GM13977 (cell line): ENCODE measurements at regions of chr3 and their contacts with region 1.

Region 1: DNA sequence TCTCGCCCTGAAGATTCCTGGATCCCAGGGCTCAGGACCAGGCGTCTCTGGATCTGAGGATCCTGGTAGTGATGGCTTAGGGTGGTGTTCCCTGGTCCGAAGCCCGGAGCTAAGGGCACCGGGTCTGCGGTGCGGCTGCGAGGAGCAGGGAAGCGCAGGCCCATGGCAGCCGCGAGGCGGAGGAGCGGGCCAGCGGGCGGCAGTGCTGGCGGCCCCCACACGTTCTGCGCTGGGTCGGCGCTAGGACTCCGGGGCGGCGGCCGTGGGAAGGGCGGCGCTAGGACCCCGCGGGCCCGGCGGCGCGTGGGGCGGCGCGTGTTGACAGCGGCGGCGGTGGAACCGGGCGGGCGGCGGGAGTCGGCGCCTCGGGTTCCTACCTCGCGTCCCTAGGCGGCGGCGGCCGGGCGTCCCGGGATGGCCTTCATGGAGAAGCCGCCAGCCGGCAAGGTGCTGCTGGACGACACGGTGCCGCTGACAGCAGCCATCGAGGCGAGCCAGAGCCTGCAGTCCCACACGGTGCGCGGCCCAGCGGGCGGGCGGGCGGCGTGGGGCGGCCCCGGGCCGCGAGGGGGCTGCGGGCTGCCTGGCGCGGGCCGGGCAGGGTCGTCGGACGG is at the start of gene PXK:
- DNase-seq: peak; percentile 88
- CTCF ChIP-seq: peak; percentile 46

Region 2: GRCh38 chr3:58414538-58415197 is 82.0 kb after region 1 on chr3:
- in situ Hi-C with region 1: loop called (anchors 10 kb)
- DNase-seq: peak; percentile 52
- CTCF ChIP-seq: peak; percentile 72

Region 3: DNA sequence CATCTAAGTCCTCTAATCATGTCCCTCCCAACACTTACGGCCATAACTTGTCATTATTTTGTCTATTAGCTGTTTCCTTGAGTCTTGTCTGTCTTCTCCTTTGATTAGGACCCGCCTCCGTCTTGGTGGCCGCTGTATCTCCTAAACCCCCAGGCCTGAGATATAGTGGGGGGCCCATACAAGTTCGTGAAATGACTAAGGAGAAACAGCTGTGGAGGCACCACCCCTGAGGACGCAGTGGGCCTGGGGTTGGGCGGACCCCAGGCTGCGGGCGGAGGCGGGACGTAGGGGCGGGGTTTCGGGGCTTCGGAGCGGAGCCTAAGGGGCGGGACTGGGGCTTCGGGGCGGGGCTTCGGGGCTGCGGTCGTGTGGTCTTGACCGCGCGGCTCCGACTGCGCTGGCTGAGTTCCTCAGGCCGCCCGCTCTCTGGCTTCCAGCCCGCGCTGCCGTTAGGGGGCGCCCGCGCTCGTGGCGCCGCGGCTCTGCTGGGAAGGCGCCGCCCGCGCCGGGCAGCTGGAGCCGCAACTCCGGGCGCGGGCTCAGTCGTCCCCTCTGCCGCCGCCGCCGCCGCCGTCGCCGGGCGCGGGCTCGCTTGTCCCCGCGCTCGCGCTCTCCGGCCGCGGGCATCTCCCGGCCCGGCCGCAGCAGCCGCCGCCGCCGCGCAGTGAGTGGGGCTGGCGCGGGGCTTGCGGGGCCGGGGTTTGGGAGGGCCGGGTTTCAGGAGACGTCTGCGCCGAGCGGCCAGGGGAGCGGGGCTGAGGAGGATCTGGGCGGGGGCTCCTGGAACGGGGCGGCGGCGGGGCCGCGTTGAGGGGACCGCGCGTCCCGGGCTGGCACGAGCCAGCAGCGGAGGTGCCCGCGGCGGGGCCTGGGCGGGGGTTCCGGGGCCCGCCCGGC is 159.1 kb after region 1 on chr3 and contains the start of gene KCTD6:
- in situ Hi-C with region 1: no loop called
- DNase-seq: peak; percentile 97
- CTCF ChIP-seq: peak; percentile 98